ENCODE measurements at regions of chr20 and their contacts with region 1.

Region 1: DNA sequence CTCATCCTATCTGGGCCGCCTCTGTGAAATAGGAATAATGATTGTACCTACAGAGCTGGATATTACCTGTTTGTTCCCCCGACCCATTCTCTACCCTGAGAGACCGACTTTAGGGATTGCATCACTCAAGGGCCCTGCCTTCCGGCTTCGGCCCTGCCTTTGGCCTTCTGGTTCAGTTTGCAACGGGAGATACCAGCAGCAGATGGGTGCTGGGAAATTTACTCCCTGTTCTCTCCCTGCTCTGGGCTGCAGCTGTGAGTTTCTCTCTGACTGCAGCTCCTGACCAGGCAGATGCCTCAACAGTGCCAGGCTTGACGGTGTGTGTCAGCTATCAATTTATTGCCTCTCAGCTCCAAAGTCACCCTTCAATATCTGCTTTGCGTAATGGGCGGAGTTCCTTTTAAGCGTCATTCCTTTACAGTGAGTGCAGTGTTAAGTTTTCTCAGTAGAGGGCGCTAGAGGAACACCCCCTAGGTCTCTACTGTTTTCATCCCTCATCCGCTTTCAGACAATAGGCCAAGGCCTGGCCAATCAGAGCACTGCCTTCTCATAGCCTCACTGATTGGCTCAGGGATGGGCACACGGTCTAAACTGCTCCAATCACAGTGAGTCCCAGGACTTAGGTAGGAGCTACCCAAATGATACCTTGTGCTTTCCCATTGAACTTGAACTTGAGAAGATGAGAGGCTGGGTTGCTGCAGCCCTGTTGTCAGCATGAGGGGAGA is 30.0 kb downstream of the KCNG1 start:
- DNase-seq: no peak
- H3K4me3 ChIP-seq: no peak overlapping the region
- CTCF ChIP-seq: peak in 1 of 3 donors; percentile 52
- POLR2A ChIP-seq: no peak

Region 2: GRCh38 chr20:50438986-50439407 is 553.9 kb before region 1 on chr20:
- intact Hi-C with region 1: no loop called
- DNase-seq: no peak
- H3K4me3 ChIP-seq: no peak overlapping the region
- CTCF ChIP-seq: no peak
- POLR2A ChIP-seq: no peak

Region 3: DNA sequence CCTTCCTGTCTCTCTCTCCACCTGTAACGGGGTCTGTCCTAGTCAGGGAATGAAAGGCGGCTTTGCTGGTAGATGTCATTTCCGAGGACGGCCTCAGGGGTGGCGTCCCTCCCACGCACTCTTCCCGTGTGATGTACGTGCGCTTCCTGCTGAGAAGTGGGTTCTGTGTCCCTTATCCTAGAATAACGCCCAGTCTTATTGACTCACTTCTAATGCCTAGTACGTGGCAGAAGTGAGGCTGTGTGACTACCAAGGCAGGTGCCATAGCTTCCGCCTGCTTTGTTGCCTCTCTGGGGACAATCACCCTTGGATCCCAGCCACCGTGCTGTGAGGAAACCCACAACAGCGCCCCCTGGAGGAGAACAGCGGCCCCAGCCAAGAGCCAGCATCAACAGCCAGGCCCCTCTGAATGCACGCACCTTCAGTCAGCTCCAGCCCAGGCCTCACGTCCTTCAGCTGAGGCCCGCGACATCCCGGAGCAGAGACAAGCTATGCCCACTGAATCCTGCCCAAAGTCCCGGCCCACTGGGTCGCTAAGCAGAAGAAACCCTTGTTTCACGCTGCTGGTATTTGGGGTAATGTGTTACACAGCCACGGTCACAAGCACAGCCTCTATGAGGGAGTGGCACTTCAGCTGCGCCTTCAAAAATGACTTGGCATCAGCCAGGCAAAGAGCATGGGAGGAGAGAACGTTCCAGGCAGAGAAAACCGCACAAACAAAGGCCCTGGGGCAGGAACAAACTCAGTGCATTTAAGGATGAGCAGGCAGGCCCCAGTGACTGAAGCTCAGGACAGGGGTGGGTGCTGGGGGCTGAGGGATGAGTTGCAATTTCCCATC is 325.4 kb after region 1 on chr20:
- intact Hi-C with region 1: loop called (anchors 5 kb)
- DNase-seq: no peak
- H3K4me3 ChIP-seq: no peak overlapping the region
- CTCF ChIP-seq: no peak
- POLR2A ChIP-seq: no peak

Measured in lower leg skin (tissue), 4 donors.